ENCODE measurements at regions of chr10 and their contacts with region 1.

Region 1: DNA sequence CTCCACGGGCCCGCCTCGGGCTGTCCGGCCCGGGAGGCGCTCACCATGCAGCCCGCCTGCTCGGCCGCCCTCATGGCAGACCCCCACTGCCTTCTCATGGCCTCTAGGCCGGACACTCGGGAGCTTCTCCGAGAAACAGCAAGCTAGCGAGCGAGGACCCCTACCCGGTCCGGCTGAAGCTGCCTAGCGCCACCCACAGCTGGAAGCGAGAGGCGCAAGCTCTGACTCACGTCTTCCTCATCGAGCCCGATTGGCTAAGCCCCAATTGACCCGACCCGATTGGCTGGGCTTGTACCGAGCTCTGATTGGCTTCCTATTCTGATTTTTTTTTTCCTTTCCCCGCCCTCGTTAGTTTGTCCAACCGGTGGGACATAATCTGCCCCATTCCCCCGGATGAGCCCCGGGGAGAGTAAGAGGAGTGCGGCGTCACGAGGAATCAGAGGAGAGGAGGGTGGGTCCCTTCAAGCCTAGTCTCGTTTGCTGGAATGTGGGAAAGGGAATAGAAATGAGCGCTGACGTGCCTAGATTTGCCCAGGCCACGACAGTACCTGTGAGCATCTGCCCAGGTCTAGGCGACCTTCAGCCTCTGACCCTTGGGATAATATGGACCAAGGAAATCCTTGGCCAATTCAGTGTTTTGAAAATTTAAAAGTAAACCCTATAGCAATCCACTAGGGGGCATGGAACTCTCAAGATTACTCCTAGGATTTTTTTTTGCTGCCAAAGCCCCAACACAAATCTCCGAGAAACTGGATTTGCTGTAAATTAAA is at the start of gene TYSND1:
- DNase-seq: peak; percentile 97
- H3K4me3 Mint-ChIP-seq: peak within 1 kb of the TSS; percentile 90
- H3K27ac Mint-ChIP-seq: peak within 1 kb of the TSS; percentile 93
- H3K4me1 Mint-ChIP-seq: peaks cover 33% of the 10 kb centered on the region
- H3K27me3 Mint-ChIP-seq: no peaks in the 10 kb centered on the region
- total RNA-seq, gene TYSND1: 12.5 to 13.0 TPM

Region 2: GRCh38 chr10:70115948-70116682 is 30.6 kb before region 1 on chr10:
- CTCF ChIA-PET with region 1: interaction called, 69 read pairs
- intact Hi-C with region 1: loop called (anchors 1 kb)
- DNase-seq: peak; percentile 70
- H3K4me3 Mint-ChIP-seq: no peak overlapping the region
- H3K27ac Mint-ChIP-seq: no peak overlapping the region
- H3K4me1 Mint-ChIP-seq: peaks cover 6% of the 10 kb centered on the region
- H3K27me3 Mint-ChIP-seq: no peaks in the 10 kb centered on the region

Region 3: DNA sequence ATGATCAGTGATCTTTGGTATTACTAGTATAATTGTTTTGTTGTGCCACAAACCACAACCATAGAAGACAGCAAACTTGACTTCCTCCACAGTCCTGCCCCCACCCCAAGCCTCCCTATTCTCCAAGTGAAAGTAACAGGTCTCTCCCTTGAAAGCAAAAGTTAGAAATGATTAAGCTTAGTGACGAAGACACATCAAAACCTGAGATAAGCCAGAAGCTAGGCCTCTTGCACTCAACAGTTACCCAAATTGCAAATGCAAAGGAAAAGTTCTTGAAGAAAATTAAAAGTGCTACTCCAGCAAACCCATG is 16.2 kb after region 1 on chr10:
- CTCF ChIA-PET with region 1: interaction called, 32 read pairs
- intact Hi-C with region 1: loop called (anchors 1 kb)
- DNase-seq: peak; percentile 87
- H3K4me3 Mint-ChIP-seq: peak overlapping the region; percentile 20
- H3K27ac Mint-ChIP-seq: peak overlapping the region; percentile 95
- H3K4me1 Mint-ChIP-seq: peaks cover 65% of the 10 kb centered on the region
- H3K27me3 Mint-ChIP-seq: no peaks in the 10 kb centered on the region

Region 4: DNA sequence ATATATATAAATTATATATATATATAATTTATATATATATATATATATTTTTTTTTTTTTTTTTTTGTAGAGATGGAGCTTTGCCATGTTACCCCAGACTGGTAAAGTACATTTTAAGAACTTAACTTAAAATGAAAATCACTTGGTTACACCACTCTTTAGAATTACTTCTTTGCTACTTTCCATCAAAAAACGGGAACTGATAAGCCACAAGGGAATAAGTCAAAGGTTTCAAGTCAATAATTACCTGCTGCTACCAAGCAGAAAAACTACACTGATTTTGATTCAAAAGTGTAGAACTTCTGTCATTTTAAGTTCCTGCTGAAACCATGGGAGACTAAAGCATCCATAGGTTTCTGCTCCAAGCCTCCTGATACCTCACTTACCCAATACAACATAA is 74.4 kb after region 1 on chr10:
- CTCF ChIA-PET with region 1: interaction called, 12 read pairs
- intact Hi-C with region 1: loop called (anchors 2 kb)
- DNase-seq: no peak
- H3K4me3 Mint-ChIP-seq: no peak overlapping the region
- H3K27ac Mint-ChIP-seq: peak overlapping the region; percentile 82
- H3K4me1 Mint-ChIP-seq: peaks cover 34% of the 10 kb centered on the region
- H3K27me3 Mint-ChIP-seq: no peaks in the 10 kb centered on the region

Region 5: DNA sequence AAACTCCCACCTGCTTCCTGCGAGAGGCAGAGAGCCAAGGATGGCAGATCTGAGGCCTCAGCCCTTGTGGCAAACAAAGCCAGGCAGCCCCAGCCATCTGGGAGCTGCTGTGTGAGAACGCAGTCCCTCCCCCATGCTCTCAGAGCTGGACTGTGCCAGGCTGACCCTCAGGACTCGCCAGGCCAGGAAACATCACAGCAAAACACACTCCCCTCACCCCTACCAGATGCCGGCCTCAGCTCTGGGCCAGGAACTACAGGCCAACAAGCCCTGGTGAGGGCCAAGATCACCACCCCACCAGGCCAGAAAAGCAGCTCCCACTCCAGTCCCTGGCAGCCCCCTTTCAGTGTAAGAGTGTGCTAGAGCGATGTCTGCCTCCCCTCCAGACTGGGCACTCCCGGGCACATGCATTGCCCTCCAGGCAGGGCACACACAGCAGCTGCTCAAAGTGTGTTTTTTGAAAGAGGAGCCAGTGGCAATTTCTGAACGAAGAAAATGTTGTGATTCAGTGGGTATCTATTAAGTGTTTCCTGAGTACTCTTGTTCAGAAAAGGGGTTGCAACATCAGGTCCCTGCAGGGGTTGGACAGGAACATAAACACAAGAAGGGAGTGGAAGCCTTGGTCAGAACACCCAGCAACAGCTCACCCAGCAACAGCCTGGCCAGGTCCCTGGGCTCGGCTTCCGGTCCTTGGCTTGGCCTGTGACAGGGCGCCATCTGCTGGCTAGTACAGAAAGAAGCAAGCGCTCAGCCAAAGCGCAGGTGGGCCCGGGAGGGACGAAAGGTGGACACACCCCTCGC is 217.5 kb after region 1 on chr10:
- CTCF ChIA-PET with region 1: interaction called, 12 read pairs
- intact Hi-C with region 1: loop called (anchors 1 kb)
- DNase-seq: peak; percentile 92
- H3K4me3 Mint-ChIP-seq: no peak overlapping the region
- H3K27ac Mint-ChIP-seq: no peak overlapping the region
- H3K4me1 Mint-ChIP-seq: peaks cover 10% of the 10 kb centered on the region
- H3K27me3 Mint-ChIP-seq: no peaks in the 10 kb centered on the region